Ascending aorta (tissue), 2 donors: ENCODE measurements at regions of chr5 and their contacts with region 1.

Region 1: GRCh38 chr5:172697123-172698121 is 56.4 kb downstream of the NEURL1B start:
- DNase-seq: peak; percentile 46 to 94
- H3K4me3 ChIP-seq: peak overlapping the region; percentile 60 to 79
- H3K27ac ChIP-seq: peak overlapping the region; percentile 75 to 81
- H3K4me1 ChIP-seq: peaks cover 0 to 34% of the 10 kb centered on the region in 2 donors
- H3K27me3 ChIP-seq: no peaks in the 10 kb centered on the region
- CTCF ChIP-seq: peak; percentile 91 to 97 (median 91)

Region 2: DNA sequence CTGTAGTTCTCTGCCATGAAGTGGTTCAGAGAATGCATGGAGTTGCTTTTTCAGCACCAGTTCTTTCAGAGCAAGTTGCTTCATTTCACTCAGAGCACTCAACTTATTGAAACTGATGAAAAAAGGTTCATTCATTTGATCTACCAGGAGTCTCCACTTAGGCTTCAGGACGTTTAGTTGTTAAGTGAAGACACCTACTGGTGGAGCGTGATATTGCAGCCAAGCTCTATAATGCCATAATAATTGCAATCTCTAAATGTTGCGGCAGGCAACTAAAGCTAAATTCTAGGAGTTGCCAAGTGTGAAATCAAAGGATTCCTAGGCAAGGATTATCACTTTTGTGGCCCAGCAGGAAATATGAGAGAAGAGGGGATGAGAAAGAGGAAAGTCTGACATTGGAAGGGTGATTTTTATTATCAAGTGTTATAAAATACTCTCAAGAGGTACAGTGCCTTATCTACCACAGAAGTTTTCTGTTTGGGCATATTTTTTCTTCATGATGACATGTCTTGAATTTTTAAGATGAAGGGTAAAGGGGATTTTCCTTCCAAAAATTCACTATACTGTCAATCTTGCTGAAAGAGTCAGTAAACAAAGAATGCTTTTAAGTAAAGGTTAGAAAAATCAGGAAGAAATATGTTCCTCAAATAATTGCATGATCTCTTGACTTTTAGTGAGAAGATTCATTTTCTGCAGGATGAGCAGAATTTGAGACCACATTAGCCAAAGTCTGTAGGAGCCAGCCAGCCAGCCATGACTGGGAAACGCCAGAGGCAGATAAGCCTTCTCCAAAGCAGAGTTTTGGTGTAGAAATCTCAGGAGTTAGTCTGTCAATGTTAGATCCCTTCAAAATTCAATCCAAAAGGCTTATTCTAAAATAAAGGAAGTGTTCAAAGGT is 326.5 kb before region 1 on chr5:
- intact Hi-C with region 1: loop called (anchors 1 kb)
- DNase-seq: no peak
- H3K4me3 ChIP-seq: no peak overlapping the region
- H3K27ac ChIP-seq: peak overlapping the region in 1 of 2 donors; percentile 27
- H3K4me1 ChIP-seq: no peaks in the 10 kb centered on the region
- H3K27me3 ChIP-seq: no peaks in the 10 kb centered on the region
- CTCF ChIP-seq: peak; percentile 42 to 58 (median 47)

Region 3: GRCh38 chr5:172479044-172479783 is 218.2 kb before region 1 on chr5:
- intact Hi-C with region 1: loop called (anchors 1 kb)
- DNase-seq: peak; percentile 27 to 88
- H3K4me3 ChIP-seq: no peak overlapping the region
- H3K27ac ChIP-seq: no peak overlapping the region
- H3K4me1 ChIP-seq: no peaks in the 10 kb centered on the region
- H3K27me3 ChIP-seq: no peaks in the 10 kb centered on the region
- CTCF ChIP-seq: peak; percentile 72 to 89 (median 83)

Region 4: DNA sequence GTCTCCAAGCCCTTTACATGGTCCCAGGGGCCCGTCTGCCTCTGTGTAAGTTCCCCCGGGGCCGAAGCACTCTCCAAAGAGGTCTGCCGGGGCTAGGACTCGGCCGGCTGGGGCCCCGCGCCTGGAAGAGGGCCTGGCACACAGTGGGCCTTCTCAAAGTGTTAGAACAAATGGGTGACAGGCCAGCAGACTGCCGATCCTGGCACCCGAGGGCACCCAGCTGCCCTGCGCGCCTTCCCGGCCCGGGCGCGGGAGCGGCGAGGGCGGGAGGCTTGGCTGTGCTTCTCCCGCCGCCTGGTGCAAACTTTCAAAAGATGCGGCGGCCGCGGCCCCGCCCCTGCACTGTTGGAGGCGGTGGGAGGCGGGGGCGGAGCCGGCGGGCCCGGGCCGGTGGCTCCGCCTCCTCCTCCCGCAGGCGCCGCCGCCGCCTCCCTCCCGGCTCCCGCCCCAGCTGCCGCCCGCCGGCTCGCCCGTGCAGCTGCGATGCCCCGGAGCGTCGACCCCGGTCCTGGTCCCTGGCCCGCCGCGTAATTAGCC is 56.5 kb before region 1 on chr5 and contains the start of gene NEURL1B:
- intact Hi-C with region 1: loop called (anchors 10 kb)
- DNase-seq: peak in 1 of 2 donors; percentile 75
- H3K4me3 ChIP-seq: peak within 1 kb of the TSS; percentile 75 to 77
- H3K27ac ChIP-seq: peak within 1 kb of the TSS; percentile 41 to 73
- H3K4me1 ChIP-seq: peaks cover 4 to 13% of the 10 kb centered on the region in 2 donors
- H3K27me3 ChIP-seq: no peaks in the 10 kb centered on the region
- CTCF ChIP-seq: no peak
- total RNA-seq, gene NEURL1B: 131 TPM

Region 5: GRCh38 chr5:172666251-172666650 is 31.2 kb before region 1 on chr5:
- intact Hi-C with region 1: loop called (anchors 1 kb)
- DNase-seq: peak in 1 of 2 donors; percentile 77
- H3K4me3 ChIP-seq: no peak overlapping the region
- H3K27ac ChIP-seq: no peak overlapping the region
- H3K4me1 ChIP-seq: no peaks in the 10 kb centered on the region
- H3K27me3 ChIP-seq: no peaks in the 10 kb centered on the region
- CTCF ChIP-seq: peak; percentile 15 to 45 (median 15)